Lower leg skin (tissue), 4 donors: ENCODE measurements at regions of chr2 and their contacts with region 1.

Region 1: DNA sequence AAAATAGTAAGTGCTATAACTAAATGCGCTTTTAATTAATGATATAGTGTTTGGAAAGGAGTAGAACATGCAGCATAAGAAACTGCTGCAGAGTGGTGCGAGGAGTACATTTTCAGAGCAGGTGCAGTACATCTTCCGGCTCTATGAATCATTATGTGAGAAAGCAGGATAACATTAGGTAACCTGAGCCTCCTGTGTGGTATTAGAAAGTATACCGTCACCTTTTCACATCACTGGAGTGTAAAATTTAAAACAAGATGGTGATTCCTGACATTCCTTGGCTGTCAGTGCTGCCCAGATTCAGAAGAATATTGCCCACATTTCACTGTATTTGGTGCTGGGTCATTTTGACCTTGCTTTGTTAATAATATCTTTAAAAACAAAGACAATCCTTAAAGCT is 7.8 kb upstream of the DYNC2LI1 start:
- DNase-seq: no peak
- H3K4me3 ChIP-seq: no peak overlapping the region
- CTCF ChIP-seq: no peak
- POLR2A ChIP-seq: no peak

Region 2: DNA sequence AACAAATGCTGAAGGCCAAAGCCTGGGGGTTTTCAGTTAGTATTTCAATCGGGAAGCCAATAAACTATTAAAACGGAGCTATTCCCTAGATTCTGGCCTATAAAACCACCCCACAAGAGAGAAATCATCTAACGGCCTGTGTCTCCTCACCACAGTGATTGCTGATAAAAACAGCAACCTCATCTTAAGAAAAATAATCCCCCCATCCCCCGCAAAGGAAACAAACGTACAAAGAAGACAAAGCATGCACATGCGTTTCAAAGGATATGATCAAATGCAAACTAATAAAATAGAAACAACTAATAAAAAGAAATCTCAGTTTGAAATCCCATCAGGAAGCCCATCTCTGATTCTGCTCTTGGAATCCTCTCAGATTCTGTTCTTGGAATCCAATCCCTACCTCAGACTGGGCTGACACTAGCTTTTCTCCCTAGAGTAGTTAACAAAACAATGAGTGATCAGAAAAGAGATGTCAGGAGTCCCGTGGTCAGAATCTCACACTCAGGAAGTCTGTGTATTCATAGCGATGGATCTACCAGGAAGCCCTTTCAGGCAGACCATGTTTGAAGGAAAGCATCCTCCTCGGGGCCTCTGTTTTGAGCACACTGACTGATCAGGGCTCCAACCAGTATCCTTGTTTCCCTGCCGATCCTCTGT is 320.9 kb before region 1 on chr2:
- intact Hi-C with region 1: loop called (anchors 5 kb)
- DNase-seq: no peak
- H3K4me3 ChIP-seq: no peak overlapping the region
- CTCF ChIP-seq: no peak
- POLR2A ChIP-seq: no peak

Region 3: DNA sequence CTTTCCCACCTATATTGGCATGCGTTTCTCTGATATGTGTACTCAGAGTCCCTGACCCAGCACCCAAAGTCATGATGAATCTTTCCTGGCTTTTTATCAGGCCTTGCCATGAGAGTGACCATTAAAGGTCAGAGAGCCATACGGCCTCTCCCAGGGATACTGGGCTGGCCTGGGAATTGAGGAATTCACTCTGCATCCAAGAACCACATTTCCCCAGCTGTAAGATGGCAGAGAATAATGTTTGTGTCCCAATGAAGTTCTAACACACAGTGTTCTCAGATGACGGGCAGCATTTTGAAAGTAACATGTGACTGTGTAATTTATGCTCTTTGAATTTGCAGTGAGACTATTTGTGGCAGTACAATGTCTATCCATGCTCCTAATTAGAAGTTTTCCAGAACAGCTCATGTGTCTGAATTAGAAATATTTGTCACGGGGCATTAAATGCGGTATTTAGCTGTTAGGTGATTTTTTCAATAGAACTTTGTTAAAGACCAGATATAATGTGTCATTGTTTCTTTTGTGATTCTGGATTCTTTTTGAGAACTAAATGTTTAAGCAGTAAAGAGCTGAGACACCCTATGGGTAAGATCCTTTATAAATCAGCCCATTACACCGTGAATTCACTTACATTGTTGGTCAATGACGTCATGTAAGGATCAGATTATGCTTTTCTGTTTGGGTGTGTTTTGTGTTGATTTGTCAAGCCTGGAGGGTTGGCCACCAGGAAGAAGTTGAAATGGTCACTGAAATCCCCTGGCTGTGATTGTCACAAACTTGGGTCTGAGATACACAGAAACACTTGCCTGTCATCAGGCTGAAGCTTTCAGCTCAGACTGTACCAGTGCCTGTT is 502.0 kb after region 1 on chr2:
- intact Hi-C with region 1: no loop called
- DNase-seq: peak in 1 of 2 donors; percentile 40
- H3K4me3 ChIP-seq: no peak overlapping the region
- CTCF ChIP-seq: no peak
- POLR2A ChIP-seq: no peak

Region 4: DNA sequence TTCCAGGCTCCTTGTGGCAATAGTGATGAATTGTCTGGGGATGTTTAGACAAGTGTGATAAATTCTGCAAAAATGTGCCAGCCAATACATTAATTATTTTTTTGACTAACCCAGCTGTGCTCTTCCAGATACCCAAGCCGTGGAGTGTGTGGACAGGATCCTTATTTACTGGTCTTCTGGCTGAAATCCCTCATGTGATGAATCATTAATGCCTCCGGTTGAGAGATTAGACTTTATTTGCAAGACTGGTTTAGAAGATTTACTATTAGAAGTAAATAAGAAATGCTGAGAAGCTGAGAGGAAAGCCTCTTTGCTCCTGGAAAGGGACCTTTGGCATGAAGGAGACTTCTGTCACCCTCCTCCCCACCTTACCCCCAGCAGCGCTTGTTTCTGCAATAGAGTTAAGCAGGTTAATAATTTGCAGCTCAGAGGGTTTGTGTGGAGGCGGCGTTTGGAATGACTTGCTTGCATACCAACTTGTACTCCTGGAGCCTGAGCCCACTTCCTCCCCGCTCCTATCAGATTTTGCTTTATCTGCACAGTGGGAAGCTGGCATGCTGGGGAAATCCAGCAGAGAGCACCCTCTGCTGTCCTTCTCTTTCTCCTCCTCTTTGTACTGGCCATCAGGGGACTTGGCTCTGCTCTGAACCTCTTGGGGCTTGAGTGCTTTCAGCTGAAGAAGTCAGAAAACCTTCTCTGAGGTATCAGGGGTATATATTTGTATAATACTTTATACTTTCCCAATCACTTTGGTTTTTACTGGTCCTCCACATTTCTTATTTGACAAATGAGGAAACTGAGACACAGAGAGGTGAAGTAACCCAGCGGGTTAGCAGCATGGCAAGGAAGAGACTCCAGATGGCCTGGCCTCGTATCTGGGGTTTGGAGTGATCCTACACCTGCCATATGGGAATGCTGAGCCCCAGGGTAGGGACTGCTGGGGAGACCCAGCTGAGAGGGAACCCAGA is 525.6 kb after region 1 on chr2:
- intact Hi-C with region 1: no loop called
- DNase-seq: peak in 1 of 2 donors; percentile 25
- H3K4me3 ChIP-seq: no peak overlapping the region
- CTCF ChIP-seq: no peak
- POLR2A ChIP-seq: no peak